Pancreas (tissue), 10 donors: ENCODE measurements at regions of chr11 and their contacts with region 1.

Region 1: GRCh38 chr11:8239536-8240228 is 24.0 kb downstream of the LMO1 start:
- DNase-seq: no peak
- ATAC-seq: no peak
- H3K4me3 ChIP-seq: no peak overlapping the region
- H3K27ac ChIP-seq: no peak overlapping the region
- H3K4me1 ChIP-seq: no peaks in the 10 kb centered on the region
- H3K27me3 ChIP-seq: no peaks in the 10 kb centered on the region
- CTCF ChIP-seq: no peak

Region 2: DNA sequence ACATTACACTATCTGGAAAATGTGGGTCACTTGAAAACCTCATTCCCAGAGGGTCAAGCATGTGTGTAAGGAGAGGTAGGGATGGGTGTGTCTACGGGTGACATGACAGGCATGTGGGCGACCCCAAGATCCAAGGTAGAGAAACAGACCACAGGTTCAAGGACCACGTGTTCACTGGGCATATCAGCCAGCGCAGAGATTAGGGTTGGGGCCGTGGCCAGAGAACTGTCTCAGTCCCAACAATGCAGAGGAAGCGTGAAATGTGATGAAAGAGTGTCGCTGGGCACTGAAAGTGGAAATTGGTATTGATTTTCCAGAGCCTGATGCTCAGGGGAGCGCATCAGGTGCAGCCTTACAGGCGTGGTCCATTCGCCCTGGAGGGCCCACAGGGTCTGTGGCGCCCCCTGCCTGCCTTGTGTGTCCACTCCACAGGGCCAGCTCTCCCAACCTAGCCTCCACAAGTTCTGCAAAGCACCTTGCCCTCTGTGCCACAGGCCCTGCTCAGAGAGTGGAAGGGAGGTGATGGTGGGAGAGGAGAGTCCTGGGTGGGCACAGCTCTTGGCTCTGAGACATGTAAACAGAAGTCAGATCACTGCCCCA is 78.8 kb after region 1 on chr11:
- intact Hi-C with region 1: loop called in 1 of 3 experiments (anchors 5 kb)
- DNase-seq: peak in 1 of 6 donors; percentile 56
- ATAC-seq: peak in 2 of 4 donors; percentile 26 to 42
- H3K4me3 ChIP-seq: no peak overlapping the region
- H3K27ac ChIP-seq: no peak overlapping the region
- H3K4me1 ChIP-seq: no peaks in the 10 kb centered on the region
- H3K27me3 ChIP-seq: no peaks in the 10 kb centered on the region
- CTCF ChIP-seq: no peak

Region 3: GRCh38 chr11:8558436-8558835 is 318.8 kb after region 1 on chr11:
- intact Hi-C with region 1: no loop called
- DNase-seq: no peak
- ATAC-seq: no peak
- H3K4me3 ChIP-seq: no peak overlapping the region
- H3K27ac ChIP-seq: no peak overlapping the region
- H3K4me1 ChIP-seq: no peaks in the 10 kb centered on the region
- H3K27me3 ChIP-seq: no peaks in the 10 kb centered on the region
- CTCF ChIP-seq: no peak